ENCODE measurements at regions of chr6 and their contacts with region 1.

Region 1: GRCh38 chr6:89940225-89941027 is 46.2 kb downstream of the GJA10 start:
- DNase-seq: peak; percentile 69
- H3K4me3 ChIP-seq: no peak overlapping the region
- H3K27ac ChIP-seq: no peak overlapping the region
- H3K4me1 ChIP-seq: no peaks in the 10 kb centered on the region
- H3K27me3 ChIP-seq: no peaks in the 10 kb centered on the region
- CTCF ChIP-seq: peak; percentile 65 to 83

Region 2: DNA sequence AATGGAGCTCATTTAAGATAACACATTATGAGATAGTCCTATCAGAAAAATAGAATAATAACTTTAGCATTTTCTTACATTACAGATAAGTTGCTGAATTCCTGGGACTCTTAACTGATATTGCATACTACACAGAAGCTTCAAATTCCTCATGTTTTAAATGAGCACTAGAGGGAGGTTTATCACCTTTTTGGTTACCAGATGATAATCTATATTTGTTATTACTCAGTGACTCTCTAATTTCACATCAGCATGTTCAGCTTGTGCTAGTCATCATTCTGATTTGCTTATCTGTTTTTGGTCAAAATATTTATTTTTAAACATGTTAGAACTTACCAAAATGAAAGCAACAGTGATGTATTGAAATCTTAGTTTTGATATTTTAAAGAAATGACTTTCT is 66.7 kb before region 1 on chr6:
- CTCF ChIA-PET with region 1: no interaction called
- dilution Hi-C with region 1: no loop called
- in situ Hi-C with region 1: no loop called
- intact Hi-C with region 1: no loop called
- DNase-seq: no peak
- H3K4me3 ChIP-seq: no peak overlapping the region
- H3K27ac ChIP-seq: no peak overlapping the region
- H3K4me1 ChIP-seq: no peaks in the 10 kb centered on the region
- H3K27me3 ChIP-seq: no peaks in the 10 kb centered on the region
- CTCF ChIP-seq: no peak

Region 3: DNA sequence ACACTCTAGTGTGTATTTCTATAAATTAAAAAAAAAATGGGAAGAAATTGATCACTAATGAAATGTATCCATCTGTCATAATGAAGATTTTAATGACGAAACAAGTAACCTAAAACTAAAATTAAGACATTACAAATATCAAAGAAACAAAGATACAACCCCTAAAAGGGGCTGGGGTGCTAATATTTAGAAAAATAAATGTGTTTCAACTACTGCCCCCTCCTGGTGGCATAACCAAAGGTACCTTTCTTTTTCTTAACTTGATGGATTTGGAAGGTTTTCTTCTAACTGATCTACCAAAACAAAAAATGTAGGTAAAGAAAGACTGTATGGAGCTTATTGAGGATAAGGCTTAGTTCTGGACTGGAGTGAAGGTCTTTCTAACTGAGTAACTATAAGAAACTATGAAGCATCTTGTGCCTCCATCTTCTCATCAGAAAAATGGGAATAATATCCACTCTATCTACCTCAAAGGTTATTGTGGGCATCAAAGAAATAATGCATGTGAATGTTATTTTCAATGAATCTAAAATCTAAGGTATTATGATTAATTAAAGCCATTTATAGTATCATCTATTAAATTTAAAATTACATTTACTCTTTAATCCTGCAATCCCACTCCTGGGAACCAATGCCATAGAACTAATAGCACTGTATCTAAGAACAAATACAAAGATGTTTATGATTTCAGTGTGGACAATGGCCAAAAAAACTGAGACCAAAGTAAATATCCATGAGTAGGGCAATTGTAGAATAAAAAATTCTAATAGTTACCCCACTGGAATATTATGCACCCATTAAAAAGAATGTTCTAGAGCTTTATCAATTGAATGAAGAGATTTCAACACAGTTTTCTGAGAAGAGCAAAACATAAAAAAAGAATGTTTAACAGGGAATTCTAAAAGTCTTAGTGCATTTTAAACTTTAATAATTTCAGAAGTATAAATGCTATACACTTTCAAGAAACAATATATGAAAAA is 239.1 kb after region 1 on chr6:
- CTCF ChIA-PET with region 1: no interaction called
- dilution Hi-C with region 1: no loop called
- in situ Hi-C with region 1: no loop called
- intact Hi-C with region 1: loop called (anchors 5 kb)
- DNase-seq: no peak
- H3K4me3 ChIP-seq: no peak overlapping the region
- H3K27ac ChIP-seq: no peak overlapping the region
- H3K4me1 ChIP-seq: peaks cover 17% of the 10 kb centered on the region
- H3K27me3 ChIP-seq: no peaks in the 10 kb centered on the region
- CTCF ChIP-seq: peak; percentile 40 to 43

Region 4: GRCh38 chr6:90393232-90393884 is 452.9 kb after region 1 on chr6:
- CTCF ChIA-PET with region 1: interaction called, 5 read pairs
- dilution Hi-C with region 1: no loop called
- in situ Hi-C with region 1: no loop called
- intact Hi-C with region 1: loop called (anchors 1 kb)
- DNase-seq: peak; percentile 57
- H3K4me3 ChIP-seq: no peak overlapping the region
- H3K27ac ChIP-seq: no peak overlapping the region
- H3K4me1 ChIP-seq: no peaks in the 10 kb centered on the region
- H3K27me3 ChIP-seq: no peaks in the 10 kb centered on the region
- CTCF ChIP-seq: peak; percentile 75 to 80

Region 5: GRCh38 chr6:90434094-90434493 is 493.7 kb after region 1 on chr6:
- CTCF ChIA-PET with region 1: no interaction called
- dilution Hi-C with region 1: no loop called
- in situ Hi-C with region 1: no loop called
- intact Hi-C with region 1: loop called (anchors 1 kb)
- DNase-seq: no peak
- H3K4me3 ChIP-seq: no peak overlapping the region
- H3K27ac ChIP-seq: no peak overlapping the region
- H3K4me1 ChIP-seq: peaks cover 5% of the 10 kb centered on the region
- H3K27me3 ChIP-seq: no peaks in the 10 kb centered on the region
- CTCF ChIP-seq: peak; percentile 19 to 23

Region 6: DNA sequence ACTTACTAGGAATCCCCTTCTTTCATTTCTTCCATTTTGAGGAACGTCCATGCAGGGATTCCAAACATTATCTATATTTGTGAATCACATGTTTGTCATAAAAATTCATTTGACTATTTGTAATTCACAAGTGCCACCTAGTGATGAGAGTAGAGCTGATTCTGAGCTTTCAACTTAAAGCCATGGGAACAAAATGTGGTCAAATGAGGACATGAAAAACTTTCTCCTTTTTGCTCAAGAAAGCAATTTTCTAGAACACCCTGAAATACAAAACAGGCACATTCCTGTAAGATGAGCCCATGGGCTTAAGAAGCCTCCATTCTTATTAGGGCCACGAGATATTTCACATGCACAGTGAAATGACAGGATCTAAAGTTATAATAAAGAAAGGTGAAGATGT is 634.2 kb after region 1 on chr6:
- CTCF ChIA-PET with region 1: no interaction called
- dilution Hi-C with region 1: no loop called
- in situ Hi-C with region 1: no loop called
- intact Hi-C with region 1: loop called (anchors 10 kb)
- DNase-seq: no peak
- H3K4me3 ChIP-seq: no peak overlapping the region
- H3K27ac ChIP-seq: no peak overlapping the region
- H3K4me1 ChIP-seq: no peaks in the 10 kb centered on the region
- H3K27me3 ChIP-seq: no peaks in the 10 kb centered on the region
- CTCF ChIP-seq: no peak